ENCODE measurements at regions of chr5 and their contacts with region 1.

Region 1: GRCh38 chr5:150624334-150625163 is 15.9 kb upstream of the SYNPO start:
- DNase-seq: peak; percentile 62
- ATAC-seq: peak; percentile 64
- H3K4me3 Mint-ChIP-seq: peak overlapping the region; percentile 74
- H3K27ac Mint-ChIP-seq: no peak overlapping the region
- H3K4me1 Mint-ChIP-seq: peaks cover 20% of the 10 kb centered on the region
- H3K27me3 Mint-ChIP-seq: peaks cover 11% of the 10 kb centered on the region

Region 2: GRCh38 chr5:150656191-150657132 is 31.9 kb after region 1 on chr5:
- CTCF ChIA-PET with region 1: no interaction called
- POLR2A ChIA-PET with region 1: interaction called, 3 read pairs
- intact Hi-C with region 1: loop called in 1 of 2 experiments (anchors 2 kb)
- DNase-seq: peak; percentile 82
- ATAC-seq: peak; percentile 82
- H3K4me3 Mint-ChIP-seq: peak overlapping the region; percentile 63
- H3K27ac Mint-ChIP-seq: no peak overlapping the region
- H3K4me1 Mint-ChIP-seq: no peaks in the 10 kb centered on the region
- H3K27me3 Mint-ChIP-seq: no peaks in the 10 kb centered on the region

Measured in activated CD4-positive, alpha-beta T cell treated with anti-CD3 and anti-CD28 coated beads for 36 hours (primary cell).